ENCODE measurements at regions of chr19 and their contacts with region 1.

Region 1: GRCh38 chr19:1605236-1606137 is at the start of gene UQCR11:
- DNase-seq: peak; percentile 97 to 98
- ATAC-seq: peak; percentile 96
- H3K4me3 ChIP-seq: peak within 1 kb of the TSS; percentile 85
- H3K27ac ChIP-seq: peak within 1 kb of the TSS in 1 of 2 donors; percentile 43
- H3K4me1 ChIP-seq: no peaks in the 10 kb centered on the region
- H3K27me3 ChIP-seq: no peaks in the 10 kb centered on the region
- total RNA-seq, gene UQCR11: 153 to 155 TPM

Region 2: GRCh38 chr19:1652471-1653299 is 47.2 kb after region 1 on chr19 and contains the start of gene TCF3:
- intact Hi-C with region 1: loop called (anchors 1 to 5 kb)
- DNase-seq: peak; percentile 99
- ATAC-seq: peak; percentile 98
- H3K4me3 ChIP-seq: peak within 1 kb of the TSS; percentile 48 to 94
- H3K27ac ChIP-seq: peak within 1 kb of the TSS; percentile 89 to 93
- H3K4me1 ChIP-seq: no peaks in the 10 kb centered on the region
- H3K27me3 ChIP-seq: no peaks in the 10 kb centered on the region
- total RNA-seq, gene TCF3: 32.0 to 50.4 TPM

Region 3: GRCh38 chr19:1754616-1755466 is 149.4 kb after region 1 on chr19:
- intact Hi-C with region 1: no loop called
- DNase-seq: no peak
- ATAC-seq: no peak
- H3K4me3 ChIP-seq: no peak overlapping the region
- H3K27ac ChIP-seq: no peak overlapping the region
- H3K4me1 ChIP-seq: no peaks in the 10 kb centered on the region
- H3K27me3 ChIP-seq: no peaks in the 10 kb centered on the region